Left cardiac atrium (tissue), 4 donors: ENCODE measurements at regions of chr12 and their contacts with region 1.

Region 1: GRCh38 chr12:89451841-89452251 is 72.8 kb downstream of the GALNT4 start:
- DNase-seq: peak; percentile 42
- ATAC-seq: peak; percentile 73 to 76

Region 2: DNA sequence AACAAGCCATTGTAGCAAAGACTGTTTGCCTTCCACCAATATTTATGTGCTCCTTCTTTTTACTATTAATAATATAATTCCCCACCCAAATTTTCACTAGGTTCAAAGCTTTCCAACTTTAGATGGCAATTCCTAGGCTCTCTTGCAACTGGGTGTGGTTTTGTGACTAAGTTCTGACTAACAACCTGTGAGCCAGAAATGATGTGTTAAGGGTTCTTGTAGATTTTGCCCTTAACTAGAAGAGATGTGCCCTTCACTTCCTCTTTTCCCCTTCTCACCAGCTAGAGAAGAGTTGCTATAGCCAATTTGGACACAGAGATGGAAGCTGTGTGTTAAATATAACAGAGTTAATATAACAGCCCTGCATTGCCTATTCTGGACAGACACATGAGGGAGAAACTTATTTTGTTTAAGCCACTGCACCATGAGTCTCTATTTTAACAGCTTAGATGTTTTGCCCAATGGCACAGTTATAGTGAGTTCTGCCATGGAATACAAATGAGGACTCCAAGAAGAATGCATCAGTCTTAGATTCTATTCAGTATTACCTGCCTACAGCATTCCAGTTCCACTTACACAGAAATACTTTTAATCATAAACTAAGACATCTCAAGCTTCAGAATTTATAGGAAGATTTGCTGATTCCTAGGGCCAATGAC is 315.7 kb before region 1 on chr12:
- intact Hi-C with region 1: loop called in 1 of 2 experiments (anchors 5 kb)
- DNase-seq: no peak
- ATAC-seq: peak in 1 of 2 donors; percentile 36

Region 3: GRCh38 chr12:89384050-89384758 is 67.6 kb before region 1 on chr12:
- intact Hi-C with region 1: loop called in 1 of 2 experiments (anchors 10 kb)
- DNase-seq: peak; percentile 46
- ATAC-seq: peak; percentile 72 to 87

Region 4: GRCh38 chr12:89389755-89390661 is 61.8 kb before region 1 on chr12:
- intact Hi-C with region 1: loop called (anchors 5 to 10 kb)
- DNase-seq: no peak
- ATAC-seq: peak; percentile 62 to 76